ENCODE measurements at regions of chr12 and their contacts with region 1.

Region 1: GRCh38 chr12:56636675-56637540 is 6.8 kb upstream of the BAZ2A start:
- DNase-seq: peak; percentile 99
- ATAC-seq: peak; percentile 69
- H3K4me3 ChIP-seq: peak overlapping the region; percentile 80 to 93
- H3K27ac ChIP-seq: peak overlapping the region; percentile 88
- H3K4me1 ChIP-seq: peaks cover 32 to 62% of the 10 kb centered on the region in 2 experiments
- H3K27me3 ChIP-seq: no peaks in the 10 kb centered on the region
- CTCF ChIP-seq: peak in 2 of 3 experiments; percentile 71 to 73; a peak in 4 of 6 replicates
- POLR2A ChIP-seq: no peak
- RAD21 ChIP-seq: no peak

Region 2: DNA sequence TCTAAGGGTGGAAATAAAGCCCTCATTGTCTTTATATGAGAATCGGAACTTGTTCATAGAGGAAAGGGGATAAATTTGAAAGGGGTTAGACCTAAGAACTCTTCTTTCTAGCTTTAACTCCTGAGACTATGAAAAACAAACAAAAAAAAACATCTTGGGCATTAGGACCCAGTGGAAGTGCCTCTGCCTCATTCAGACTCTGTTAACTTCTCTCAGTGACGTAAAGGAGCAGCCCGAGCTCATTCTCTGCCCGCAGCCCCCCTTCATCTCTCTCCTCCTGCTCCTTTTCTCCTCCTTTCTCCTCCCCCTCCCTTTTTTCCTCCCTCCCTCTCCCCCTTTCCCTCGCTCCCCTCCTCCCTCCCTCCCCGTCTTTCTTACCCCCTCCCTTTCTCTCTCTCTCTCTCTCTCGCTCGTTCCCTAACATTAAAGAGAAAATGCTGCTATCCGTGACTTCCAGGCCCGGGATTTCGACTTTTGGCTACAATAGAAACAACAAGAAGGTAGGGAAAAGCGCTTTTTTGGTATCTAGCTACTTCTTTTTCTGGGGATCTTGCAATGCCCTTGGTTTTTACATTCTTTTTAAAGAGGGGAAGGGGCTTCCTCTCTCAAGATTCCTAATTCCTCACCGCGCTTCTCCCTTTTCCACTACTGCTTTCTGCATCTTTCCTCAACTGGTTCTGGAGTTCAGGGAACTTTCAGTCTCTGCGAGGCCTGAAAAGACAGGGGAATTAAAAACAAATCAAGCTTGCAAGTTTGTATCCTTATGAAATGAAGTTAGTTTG is 115.1 kb before region 1 on chr12 and contains the start of gene RBMS2:
- CTCF ChIA-PET with region 1: interaction called, 22 read pairs
- POLR2A ChIA-PET with region 1: interaction called, 9 read pairs
- RAD21 ChIA-PET with region 1: interaction called, 3 read pairs
- intact Hi-C with region 1: loop called (anchors 2 kb)
- DNase-seq: peak; percentile 89
- ATAC-seq: peak; percentile 74
- H3K4me3 ChIP-seq: peak within 1 kb of the TSS; percentile 59 to 82
- H3K27ac ChIP-seq: peak within 1 kb of the TSS; percentile 76
- H3K4me1 ChIP-seq: peaks cover 58 to 89% of the 10 kb centered on the region in 2 experiments
- H3K27me3 ChIP-seq: no peaks in the 10 kb centered on the region
- CTCF ChIP-seq: no peak
- POLR2A ChIP-seq: no peak
- RAD21 ChIP-seq: no peak
- total RNA-seq, gene RBMS2: 40.8 TPM

Region 3: GRCh38 chr12:56541631-56542030 is 95.3 kb before region 1 on chr12:
- CTCF ChIA-PET with region 1: no interaction called
- POLR2A ChIA-PET with region 1: no interaction called
- RAD21 ChIA-PET with region 1: no interaction called
- intact Hi-C with region 1: no loop called
- DNase-seq: no peak
- ATAC-seq: no peak
- H3K4me3 ChIP-seq: no peak overlapping the region
- H3K27ac ChIP-seq: no peak overlapping the region
- H3K4me1 ChIP-seq: peaks cover 0 to 4% of the 10 kb centered on the region in 2 experiments; a peak in 1 of 4 replicates
- H3K27me3 ChIP-seq: no peaks in the 10 kb centered on the region
- CTCF ChIP-seq: no peak
- POLR2A ChIP-seq: no peak
- RAD21 ChIP-seq: no peak

Region 4: DNA sequence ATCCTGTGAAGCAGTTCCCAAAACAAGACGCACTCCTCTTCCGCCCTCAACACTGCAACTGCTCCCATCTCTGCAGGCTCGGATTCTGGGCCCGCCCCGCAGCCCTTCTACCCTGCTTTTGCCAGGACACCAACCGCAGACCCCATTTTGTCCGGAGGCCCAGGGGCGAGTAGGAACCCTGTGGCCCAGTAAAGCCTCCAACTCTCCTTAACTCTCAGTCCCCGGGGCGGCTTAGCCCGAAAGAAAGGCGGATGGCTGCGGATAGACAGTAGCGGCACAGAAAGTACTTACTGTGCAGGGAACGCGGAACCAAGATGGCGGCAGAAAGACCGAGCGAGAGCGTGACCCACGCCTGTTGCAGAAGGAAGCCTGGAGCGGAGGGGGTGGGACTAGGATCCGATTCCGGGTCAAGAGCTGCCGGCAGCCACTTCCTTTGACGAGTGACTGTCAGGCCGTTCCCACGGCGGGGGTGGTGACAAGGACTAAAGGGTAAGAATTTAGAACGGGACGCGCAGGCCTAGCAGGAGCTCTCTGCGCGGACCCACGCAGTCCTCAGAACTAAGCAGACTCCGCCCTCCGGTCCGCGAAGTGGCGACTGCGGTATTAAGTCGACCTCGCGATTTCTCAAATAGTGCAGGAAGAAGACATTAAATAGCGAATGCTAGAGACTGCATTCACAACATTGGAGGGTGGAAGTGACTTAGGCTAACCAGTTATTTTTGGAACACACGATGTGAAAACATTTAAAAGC is 88.2 kb after region 1 on chr12 and contains the start of gene NACA:
- CTCF ChIA-PET with region 1: no interaction called
- POLR2A ChIA-PET with region 1: interaction called, 12 read pairs
- RAD21 ChIA-PET with region 1: no interaction called
- intact Hi-C with region 1: no loop called
- DNase-seq: peak; percentile 95
- ATAC-seq: peak; percentile 94
- H3K4me3 ChIP-seq: peak within 1 kb of the TSS; percentile 92 to 99
- H3K27ac ChIP-seq: peak within 1 kb of the TSS; percentile 91
- H3K4me1 ChIP-seq: peaks cover 21 to 42% of the 10 kb centered on the region in 2 experiments; a peak in 3 of 4 replicates
- H3K27me3 ChIP-seq: no peaks in the 10 kb centered on the region
- CTCF ChIP-seq: no peak
- POLR2A ChIP-seq: peak; percentile 75
- RAD21 ChIP-seq: no peak
- total RNA-seq, gene NACA: 896 TPM